Panc1 (cell line): ENCODE measurements at regions of chr17 and their contacts with region 1.

Region 1: GRCh38 chr17:60372790-60373483 is 19.0 kb downstream of the USP32 start:
- DNase-seq: no peak
- ATAC-seq: peak; percentile 95
- H3K4me3 ChIP-seq: no peak overlapping the region
- H3K27ac ChIP-seq: no peak overlapping the region
- H3K4me1 ChIP-seq: peaks cover 10% of the 10 kb centered on the region; the same call in 1 of the 2 replicates
- H3K27me3 ChIP-seq: no peaks in the 10 kb centered on the region
- CTCF ChIP-seq: no peak

Region 2: DNA sequence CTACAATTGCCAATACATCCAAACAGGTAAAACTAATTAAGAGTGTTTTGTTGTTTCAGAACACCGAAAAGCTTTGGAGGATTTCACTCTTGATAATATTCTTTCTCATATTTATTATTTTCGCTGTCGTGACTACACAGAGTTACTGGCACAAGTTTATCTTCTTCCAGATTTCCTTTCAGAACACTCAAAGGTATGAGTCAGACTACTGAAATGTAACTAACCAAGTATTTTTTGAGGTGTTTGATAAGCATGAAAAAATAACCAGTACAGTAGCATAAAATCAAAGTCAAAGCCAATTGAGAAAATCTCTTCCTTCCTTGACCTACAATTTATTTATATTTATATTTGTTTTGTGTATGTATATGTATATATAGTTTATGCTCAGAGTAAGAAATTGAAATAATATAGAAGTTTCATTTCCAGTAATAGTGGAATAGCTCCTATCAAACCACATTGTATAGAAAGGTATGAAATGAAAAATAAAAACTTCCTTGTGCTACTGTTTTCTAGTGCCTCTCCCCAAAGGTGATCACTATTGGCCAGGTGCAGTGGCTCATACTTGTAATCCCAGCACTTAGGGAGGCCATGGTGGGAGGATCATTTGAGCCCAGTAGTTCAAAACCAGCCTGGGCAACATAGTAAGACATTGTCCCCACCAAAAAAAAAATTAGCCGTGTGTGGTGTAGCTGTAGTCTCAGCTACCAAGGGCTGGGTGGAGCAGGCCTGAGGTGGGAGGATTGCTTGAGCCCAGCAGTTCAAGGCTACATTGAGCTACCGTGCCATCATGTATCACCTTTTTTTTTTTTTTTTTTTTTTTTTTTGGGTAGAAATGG is 1669.6 kb before region 1 on chr17:
- CTCF ChIA-PET with region 1: no interaction called
- POLR2A ChIA-PET with region 1: interaction called, 14 read pairs
- in situ Hi-C with region 1: no loop called
- intact Hi-C with region 1: no loop called
- DNase-seq: no peak
- ATAC-seq: no peak
- H3K4me3 ChIP-seq: no peak overlapping the region
- H3K27ac ChIP-seq: no peak overlapping the region
- H3K4me1 ChIP-seq: no peaks in the 10 kb centered on the region
- H3K27me3 ChIP-seq: no peaks in the 10 kb centered on the region
- CTCF ChIP-seq: no peak

Region 3: GRCh38 chr17:59432657-59433056 is 940.3 kb before region 1 on chr17:
- CTCF ChIA-PET with region 1: no interaction called
- POLR2A ChIA-PET with region 1: interaction called, 13 read pairs
- in situ Hi-C with region 1: no loop called
- intact Hi-C with region 1: no loop called
- DNase-seq: no peak
- ATAC-seq: no peak
- H3K4me3 ChIP-seq: no peak overlapping the region
- H3K27ac ChIP-seq: no peak overlapping the region
- H3K4me1 ChIP-seq: no peaks in the 10 kb centered on the region
- H3K27me3 ChIP-seq: no peaks in the 10 kb centered on the region; the same call in 1 of the 2 replicates
- CTCF ChIP-seq: no peak

Region 4: DNA sequence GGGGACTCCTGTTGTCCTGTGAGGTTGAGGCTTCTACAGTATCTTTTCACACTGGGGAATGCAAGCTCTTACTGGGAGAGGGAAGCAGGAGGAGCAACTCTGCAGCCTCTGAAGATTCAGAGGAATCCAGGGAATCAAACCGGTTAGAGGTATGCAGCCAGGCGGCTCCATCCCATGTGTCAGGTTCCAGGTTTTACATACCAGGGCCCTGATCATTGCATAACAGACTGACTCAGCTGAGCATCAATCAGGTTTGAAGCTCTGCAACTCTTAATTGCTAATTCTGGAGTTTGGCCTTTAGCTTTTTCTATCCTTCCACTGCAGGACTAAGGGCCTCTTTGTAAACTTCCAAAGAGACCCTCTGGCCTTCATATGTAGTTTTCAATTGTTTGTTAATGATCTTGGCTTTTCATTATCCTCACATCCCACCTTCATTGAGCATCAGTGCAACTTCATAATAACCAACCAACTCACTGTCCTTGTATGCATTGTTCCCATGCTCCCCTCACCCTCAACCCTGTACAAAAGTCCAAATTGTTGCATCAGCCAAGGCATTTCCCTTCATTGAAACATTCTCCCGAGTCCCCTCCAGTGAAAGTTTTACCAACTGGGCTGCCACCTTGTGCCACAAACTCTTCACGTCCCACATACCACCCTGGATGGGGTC is 867.2 kb before region 1 on chr17:
- CTCF ChIA-PET with region 1: no interaction called
- POLR2A ChIA-PET with region 1: no interaction called
- in situ Hi-C with region 1: no loop called
- intact Hi-C with region 1: no loop called
- DNase-seq: no peak
- ATAC-seq: no peak
- H3K4me3 ChIP-seq: no peak overlapping the region
- H3K27ac ChIP-seq: no peak overlapping the region
- H3K4me1 ChIP-seq: no peaks in the 10 kb centered on the region
- H3K27me3 ChIP-seq: no peaks in the 10 kb centered on the region
- CTCF ChIP-seq: no peak

Region 5: GRCh38 chr17:60398227-60398959 is 25.5 kb after region 1 on chr17:
- CTCF ChIA-PET with region 1: no interaction called
- POLR2A ChIA-PET with region 1: no interaction called
- in situ Hi-C with region 1: no loop called
- intact Hi-C with region 1: no loop called
- DNase-seq: no peak
- ATAC-seq: no peak
- H3K4me3 ChIP-seq: no peak overlapping the region
- H3K27ac ChIP-seq: no peak overlapping the region
- H3K4me1 ChIP-seq: no peaks in the 10 kb centered on the region
- H3K27me3 ChIP-seq: no peaks in the 10 kb centered on the region
- CTCF ChIP-seq: no peak